ENCODE measurements at regions of chr2 and their contacts with region 1.

Region 1: GRCh38 chr2:136423516-136423996 is 305.6 kb upstream of the CXCR4 start:
- DNase-seq: peak; percentile 77 to 91
- ATAC-seq: peak; percentile 91
- H3K4me3 ChIP-seq: peak overlapping the region; percentile 34 to 42
- H3K27ac ChIP-seq: no peak overlapping the region
- H3K4me1 ChIP-seq: no peaks in the 10 kb centered on the region
- H3K27me3 ChIP-seq: no peaks in the 10 kb centered on the region

Region 2: GRCh38 chr2:136171221-136171620 is 252.3 kb before region 1 on chr2:
- intact Hi-C with region 1: no loop called
- DNase-seq: no peak
- ATAC-seq: no peak
- H3K4me3 ChIP-seq: no peak overlapping the region
- H3K27ac ChIP-seq: no peak overlapping the region
- H3K4me1 ChIP-seq: no peaks in the 10 kb centered on the region
- H3K27me3 ChIP-seq: peaks cover 0 to 9% of the 10 kb centered on the region in 2 donors

Region 3: DNA sequence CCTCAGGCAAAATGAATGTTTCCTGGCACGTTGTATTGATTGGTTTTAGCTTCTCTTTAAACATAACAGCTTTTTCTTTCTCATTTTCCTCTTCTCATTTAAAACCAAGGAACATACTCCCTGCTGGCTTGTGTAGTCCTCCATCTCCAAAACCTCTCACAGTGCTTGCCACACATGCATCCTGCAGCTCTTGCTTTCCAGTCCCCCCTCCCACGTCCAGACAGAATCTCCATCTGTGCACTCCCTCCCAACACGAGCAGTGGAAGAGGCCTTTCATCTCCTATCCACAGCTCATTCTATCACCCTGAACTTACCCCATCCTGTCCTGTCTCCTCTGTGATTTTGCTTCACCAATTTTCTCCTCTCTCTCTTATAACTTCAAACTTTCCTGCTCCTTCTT is 242.2 kb after region 1 on chr2:
- intact Hi-C with region 1: loop called (anchors 5 to 10 kb)
- DNase-seq: no peak
- ATAC-seq: no peak
- H3K4me3 ChIP-seq: no peak overlapping the region
- H3K27ac ChIP-seq: no peak overlapping the region
- H3K4me1 ChIP-seq: no peaks in the 10 kb centered on the region
- H3K27me3 ChIP-seq: no peaks in the 10 kb centered on the region

Region 4: DNA sequence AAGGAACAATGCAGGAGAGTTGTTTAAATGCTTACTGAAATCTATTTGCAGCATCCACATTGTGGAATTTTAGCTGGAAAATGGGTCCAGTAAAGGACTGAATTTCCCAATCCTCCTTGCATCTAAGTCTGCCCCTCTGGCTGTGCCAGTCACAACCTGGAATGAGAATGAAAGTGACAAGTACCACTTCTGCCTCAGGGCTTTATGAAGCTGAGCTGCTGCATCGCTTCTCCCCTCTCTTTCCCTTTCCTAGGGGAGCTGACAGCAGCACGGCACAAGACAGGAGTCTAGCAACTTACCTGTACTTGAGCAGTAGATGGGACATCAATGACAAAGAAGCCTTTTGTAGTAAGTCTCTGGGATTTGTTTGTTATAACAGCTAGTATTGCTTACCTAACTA is 314.5 kb after region 1 on chr2:
- intact Hi-C with region 1: loop called in 1 of 2 experiments (anchors 5 kb)
- DNase-seq: no peak
- ATAC-seq: no peak
- H3K4me3 ChIP-seq: no peak overlapping the region
- H3K27ac ChIP-seq: no peak overlapping the region
- H3K4me1 ChIP-seq: no peaks in the 10 kb centered on the region
- H3K27me3 ChIP-seq: no peaks in the 10 kb centered on the region

Region 5: GRCh38 chr2:136917411-136917881 is 493.9 kb after region 1 on chr2:
- intact Hi-C with region 1: loop called in 1 of 2 experiments (anchors 10 kb)
- DNase-seq: no peak
- ATAC-seq: peak; percentile 33
- H3K4me3 ChIP-seq: no peak overlapping the region
- H3K27ac ChIP-seq: no peak overlapping the region
- H3K4me1 ChIP-seq: no peaks in the 10 kb centered on the region
- H3K27me3 ChIP-seq: no peaks in the 10 kb centered on the region

Region 6: DNA sequence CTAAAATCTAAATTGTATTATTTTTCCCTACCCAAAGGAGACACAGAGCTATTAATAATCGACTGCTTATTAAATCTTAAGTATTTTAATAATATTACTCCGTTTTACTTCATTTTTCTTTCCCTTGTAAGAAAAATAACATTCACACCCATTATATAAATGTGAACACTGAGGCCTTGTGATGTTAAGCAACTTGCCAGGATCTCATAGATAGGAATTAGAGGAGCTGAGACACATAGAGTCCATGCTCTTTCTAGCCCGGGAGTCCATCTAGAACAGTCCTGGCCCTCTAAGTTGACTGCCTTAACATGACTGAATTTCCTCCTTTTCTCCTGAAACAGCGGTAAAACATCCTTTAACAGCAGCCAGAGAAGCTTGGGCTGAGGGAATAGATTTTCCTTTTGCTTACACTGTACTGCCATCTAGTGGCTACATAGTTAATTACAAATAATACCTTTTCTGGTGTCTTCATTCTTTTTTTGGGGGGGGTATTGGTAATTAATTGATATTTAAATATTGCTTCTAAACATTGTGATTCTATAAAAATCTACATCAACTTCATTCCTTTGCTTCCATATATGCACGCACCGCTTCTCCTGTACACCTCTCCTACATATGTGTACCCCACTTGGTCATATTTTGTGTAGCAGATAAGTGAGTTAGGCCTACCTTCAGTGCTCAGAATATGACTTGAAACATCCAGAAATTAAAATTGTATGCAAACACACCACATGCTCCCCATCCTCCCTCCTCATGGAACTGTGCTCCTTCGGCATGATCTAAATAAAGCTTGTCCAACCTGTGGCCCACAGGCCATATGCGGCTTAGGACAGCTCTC is 1414.9 kb after region 1 on chr2:
- intact Hi-C with region 1: loop called (anchors 5 kb)
- DNase-seq: no peak
- ATAC-seq: peak; percentile 62
- H3K4me3 ChIP-seq: no peak overlapping the region
- H3K27ac ChIP-seq: no peak overlapping the region
- H3K4me1 ChIP-seq: no peaks in the 10 kb centered on the region
- H3K27me3 ChIP-seq: no peaks in the 10 kb centered on the region

Measured in aorta (tissue), 5 donors.